ENCODE measurements at regions of chr13 and their contacts with region 1.

Region 1: DNA sequence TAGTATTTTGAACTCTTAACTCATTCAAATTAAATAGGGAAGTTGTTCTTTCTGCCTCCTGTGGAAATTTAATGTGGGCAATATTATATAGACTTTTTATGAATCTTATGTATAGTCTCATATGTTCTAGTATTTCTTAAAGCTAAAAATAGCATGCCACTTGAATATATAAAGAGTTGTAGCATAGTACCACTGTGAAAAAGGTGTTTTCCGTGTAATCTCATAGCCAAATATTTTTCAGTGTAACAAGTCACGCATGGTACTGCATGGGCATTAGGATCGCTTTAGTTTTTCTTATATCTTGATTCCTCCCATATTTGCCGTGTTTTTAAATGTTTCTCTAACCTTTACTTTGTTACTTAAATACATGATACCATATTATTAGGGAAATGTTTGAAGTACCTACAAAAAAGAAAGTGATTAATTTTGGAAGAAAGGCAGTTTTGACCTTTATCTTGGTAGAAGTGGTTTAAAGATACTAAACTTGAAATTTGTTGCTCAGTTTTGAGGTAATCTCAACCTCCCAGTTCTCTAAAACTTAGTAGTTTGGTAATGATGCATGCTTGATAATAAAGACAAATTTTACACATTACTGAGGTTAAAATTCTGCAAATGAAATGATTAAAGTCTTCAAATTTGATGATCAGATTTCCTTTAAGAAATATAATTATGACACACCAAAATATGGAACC is 81.2 kb downstream of the PAN3 start:
- DNase-seq: no peak
- ATAC-seq: peak; percentile 51
- H3K4me3 ChIP-seq: no peak overlapping the region
- H3K27ac ChIP-seq: no peak overlapping the region
- H3K4me1 ChIP-seq: 0 out of 2 replicates have a peak, but pooled peaks cover 3% of the 10 kb centered on the region
- H3K27me3 ChIP-seq: no peaks in the 10 kb centered on the region
- CTCF ChIP-seq: no peak
- EP300 ChIP-seq: no peak
- POLR2A ChIP-seq: no peak
- RAD21 ChIP-seq: no peak

Region 2: GRCh38 chr13:28161370-28161769 is 58.2 kb before region 1 on chr13:
- CTCF ChIA-PET with region 1: no interaction called
- POLR2A ChIA-PET with region 1: no interaction called
- RAD21 ChIA-PET with region 1: no interaction called
- SMC1A ChIA-PET with region 1: no interaction called
- in situ Hi-C with region 1: no loop called
- intact Hi-C with region 1: no loop called
- DNase-seq: no peak
- ATAC-seq: no peak; the same call in 2 of the 3 replicates
- H3K4me3 ChIP-seq: no peak overlapping the region
- H3K27ac ChIP-seq: no peak overlapping the region
- H3K4me1 ChIP-seq: 0 out of 2 replicates have a peak, but pooled peaks cover 3% of the 10 kb centered on the region
- H3K27me3 ChIP-seq: no peaks in the 10 kb centered on the region
- CTCF ChIP-seq: no peak
- EP300 ChIP-seq: no peak
- POLR2A ChIP-seq: no peak
- RAD21 ChIP-seq: no peak

Region 3: GRCh38 chr13:28181413-28181812 is 38.1 kb before region 1 on chr13:
- CTCF ChIA-PET with region 1: interaction called, 3 read pairs
- POLR2A ChIA-PET with region 1: no interaction called
- RAD21 ChIA-PET with region 1: no interaction called
- SMC1A ChIA-PET with region 1: no interaction called
- in situ Hi-C with region 1: no loop called
- intact Hi-C with region 1: loop called (anchors 5 kb)
- DNase-seq: no peak
- ATAC-seq: no peak; the same call in 2 of the 3 replicates
- H3K4me3 ChIP-seq: no peak overlapping the region
- H3K27ac ChIP-seq: no peak overlapping the region
- H3K4me1 ChIP-seq: no peaks in the 10 kb centered on the region
- H3K27me3 ChIP-seq: no peaks in the 10 kb centered on the region
- CTCF ChIP-seq: no peak
- EP300 ChIP-seq: no peak
- POLR2A ChIP-seq: no peak
- RAD21 ChIP-seq: no peak

Region 4: GRCh38 chr13:28268800-28269223 is 49.3 kb after region 1 on chr13:
- CTCF ChIA-PET with region 1: no interaction called
- POLR2A ChIA-PET with region 1: no interaction called
- RAD21 ChIA-PET with region 1: no interaction called
- SMC1A ChIA-PET with region 1: no interaction called
- in situ Hi-C with region 1: no loop called
- intact Hi-C with region 1: no loop called
- DNase-seq: peak; percentile 94
- ATAC-seq: peak; percentile 99
- H3K4me3 ChIP-seq: no peak overlapping the region
- H3K27ac ChIP-seq: peak overlapping the region; percentile 54
- H3K4me1 ChIP-seq: peaks cover 10% of the 10 kb centered on the region; the same call in 1 of the 2 replicates
- H3K27me3 ChIP-seq: no peaks in the 10 kb centered on the region
- CTCF ChIP-seq: no peak
- EP300 ChIP-seq: peak; percentile 96 to 100
- POLR2A ChIP-seq: no peak
- RAD21 ChIP-seq: peak; percentile 51